Lower lobe of right lung (tissue), 2 donors: ENCODE measurements at regions of chr12 and their contacts with region 1.

Region 1: DNA sequence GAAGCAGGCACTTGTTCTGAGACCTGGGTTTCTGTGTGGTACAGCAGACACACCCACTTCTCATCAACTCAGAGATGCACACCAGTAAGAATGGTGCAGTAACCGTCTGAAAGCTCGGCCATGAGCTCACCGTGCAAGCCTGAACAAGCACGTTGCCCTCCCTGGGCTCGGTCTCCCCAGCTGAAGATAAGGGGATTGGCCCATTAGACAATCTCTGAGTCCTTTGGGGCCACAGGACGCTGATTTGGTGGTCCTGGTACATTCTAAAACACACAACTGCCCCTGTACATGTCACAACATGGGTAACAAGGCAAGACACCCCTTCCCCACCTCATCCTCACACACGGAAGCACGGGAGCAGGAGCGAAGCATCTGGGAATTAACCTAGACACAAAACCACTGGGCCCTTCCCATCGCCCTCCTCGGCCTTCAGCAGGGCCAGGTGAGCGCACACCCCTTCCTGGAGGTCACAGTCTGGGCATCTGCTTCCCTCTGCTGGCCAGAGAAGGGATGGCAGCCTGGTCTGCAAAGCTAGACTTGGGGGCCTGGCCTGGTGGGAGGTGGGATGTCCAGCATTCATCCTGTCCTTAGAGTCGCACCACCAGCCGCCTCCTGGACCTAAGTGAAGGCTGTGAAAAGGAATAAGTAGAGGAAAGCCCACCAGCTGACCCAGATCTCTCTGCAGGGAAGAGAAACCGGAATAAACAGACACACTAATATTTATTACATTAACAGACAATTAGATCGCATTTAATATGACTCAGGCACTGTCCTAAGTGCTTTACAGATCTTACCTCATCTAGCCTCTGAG is 18.9 kb upstream of the SMUG1 start:
- DNase-seq: peak; percentile 73
- ATAC-seq: peak; percentile 81 to 86
- H3K4me3 ChIP-seq: no peak overlapping the region
- H3K27ac ChIP-seq: no peak overlapping the region
- H3K4me1 ChIP-seq: no peaks in the 10 kb centered on the region
- H3K27me3 ChIP-seq: peaks cover 35% of the 10 kb centered on the region
- CTCF ChIP-seq: peak; percentile 91

Region 2: DNA sequence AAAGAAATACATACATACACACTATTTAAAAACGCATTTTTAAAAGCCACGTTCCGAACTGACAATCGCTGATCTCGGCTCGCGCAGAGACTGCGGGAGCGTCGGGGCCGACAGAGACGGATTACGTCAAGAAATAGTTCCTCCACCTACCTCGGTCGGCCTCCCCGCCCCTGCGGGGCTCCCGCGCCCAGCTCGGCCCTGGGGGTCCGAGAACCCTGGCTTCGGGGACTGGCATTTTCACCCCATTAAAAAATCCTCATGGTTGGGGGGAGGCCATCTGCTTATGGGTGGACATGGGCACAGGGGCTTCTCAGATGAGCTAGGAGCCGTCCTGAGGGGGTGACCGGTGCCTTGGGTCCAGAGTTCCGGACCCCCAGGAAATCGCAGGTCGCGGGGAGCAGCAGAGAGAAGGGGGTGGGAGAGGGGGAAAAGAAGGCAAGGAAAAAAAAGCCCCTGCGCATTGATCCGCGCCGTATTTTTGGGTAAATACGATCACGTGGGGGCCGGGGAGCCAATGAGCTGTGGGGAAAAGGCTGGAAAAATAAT is 208.1 kb before region 1 on chr12:
- intact Hi-C with region 1: loop called (anchors 5 kb)
- DNase-seq: no peak
- ATAC-seq: no peak
- H3K4me3 ChIP-seq: peak overlapping the region; percentile 41
- H3K27ac ChIP-seq: no peak overlapping the region
- H3K4me1 ChIP-seq: peaks cover 34% of the 10 kb centered on the region
- H3K27me3 ChIP-seq: peaks cover 100% of the 10 kb centered on the region
- CTCF ChIP-seq: no peak